Left ventricle myocardium inferior (tissue), 1 donor: ENCODE measurements at regions of chr20 and their contacts with region 1.

Region 1: GRCh38 chr20:42204203-42204942 is 586.2 kb upstream of the CHD6 start:
- DNase-seq: no peak
- H3K4me3 ChIP-seq: no peak overlapping the region
- H3K27ac ChIP-seq: no peak overlapping the region
- H3K4me1 ChIP-seq: no peaks in the 10 kb centered on the region
- H3K27me3 ChIP-seq: peaks cover 6% of the 10 kb centered on the region
- CTCF ChIP-seq: peak; percentile 50

Region 2: GRCh38 chr20:42161228-42161829 is 43.0 kb before region 1 on chr20:
- intact Hi-C with region 1: no loop called
- DNase-seq: no peak
- H3K4me3 ChIP-seq: no peak overlapping the region
- H3K27ac ChIP-seq: no peak overlapping the region
- H3K4me1 ChIP-seq: no peaks in the 10 kb centered on the region
- H3K27me3 ChIP-seq: peaks cover 23% of the 10 kb centered on the region
- CTCF ChIP-seq: no peak

Region 3: GRCh38 chr20:42281801-42282200 is 77.4 kb after region 1 on chr20:
- intact Hi-C with region 1: no loop called
- DNase-seq: no peak
- H3K4me3 ChIP-seq: no peak overlapping the region
- H3K27ac ChIP-seq: no peak overlapping the region
- H3K4me1 ChIP-seq: no peaks in the 10 kb centered on the region
- H3K27me3 ChIP-seq: no peaks in the 10 kb centered on the region
- CTCF ChIP-seq: no peak

Region 4: GRCh38 chr20:42530822-42531448 is 326.6 kb after region 1 on chr20:
- intact Hi-C with region 1: loop called (anchors 5 kb)
- DNase-seq: no peak
- H3K4me3 ChIP-seq: no peak overlapping the region
- H3K27ac ChIP-seq: no peak overlapping the region
- H3K4me1 ChIP-seq: no peaks in the 10 kb centered on the region
- H3K27me3 ChIP-seq: peaks cover 4% of the 10 kb centered on the region
- CTCF ChIP-seq: peak; percentile 77

Region 5: GRCh38 chr20:42544926-42545325 is 340.6 kb after region 1 on chr20:
- intact Hi-C with region 1: no loop called
- DNase-seq: no peak
- H3K4me3 ChIP-seq: no peak overlapping the region
- H3K27ac ChIP-seq: no peak overlapping the region
- H3K4me1 ChIP-seq: no peaks in the 10 kb centered on the region
- H3K27me3 ChIP-seq: peaks cover 3% of the 10 kb centered on the region
- CTCF ChIP-seq: no peak

Region 6: GRCh38 chr20:42652266-42652665 is 447.9 kb after region 1 on chr20:
- intact Hi-C with region 1: no loop called
- DNase-seq: no peak
- H3K4me3 ChIP-seq: no peak overlapping the region
- H3K27ac ChIP-seq: no peak overlapping the region
- H3K4me1 ChIP-seq: no peaks in the 10 kb centered on the region
- H3K27me3 ChIP-seq: no peaks in the 10 kb centered on the region
- CTCF ChIP-seq: no peak